ENCODE measurements at regions of chr3 and their contacts with region 1.

Region 1: GRCh38 chr3:99023590-99024192 is 122.2 kb upstream of the DCBLD2 start:
- ATAC-seq: no peak
- H3K4me3 ChIP-seq: no peak overlapping the region
- H3K27ac ChIP-seq: no peak overlapping the region
- H3K4me1 ChIP-seq: no peaks in the 10 kb centered on the region

Region 2: GRCh38 chr3:98602078-98602678 is 421.5 kb before region 1 on chr3:
- in situ Hi-C with region 1: loop called in 1 of 9 experiments (anchors 25 kb)
- ATAC-seq: peak; percentile 61 to 86 (median 76)
- H3K4me3 ChIP-seq: no peak overlapping the region
- H3K27ac ChIP-seq: no peak overlapping the region
- H3K4me1 ChIP-seq: no peaks in the 10 kb centered on the region

Region 3: GRCh38 chr3:99114565-99115291 is 91.0 kb after region 1 on chr3:
- in situ Hi-C with region 1: loop called in 1 of 9 experiments (anchors 10 kb)
- ATAC-seq: peak in 3 of 8 experiments; percentile 96 to 99 (median 99)
- H3K4me3 ChIP-seq: no peak overlapping the region
- H3K27ac ChIP-seq: no peak overlapping the region
- H3K4me1 ChIP-seq: no peaks in the 10 kb centered on the region

Region 4: DNA sequence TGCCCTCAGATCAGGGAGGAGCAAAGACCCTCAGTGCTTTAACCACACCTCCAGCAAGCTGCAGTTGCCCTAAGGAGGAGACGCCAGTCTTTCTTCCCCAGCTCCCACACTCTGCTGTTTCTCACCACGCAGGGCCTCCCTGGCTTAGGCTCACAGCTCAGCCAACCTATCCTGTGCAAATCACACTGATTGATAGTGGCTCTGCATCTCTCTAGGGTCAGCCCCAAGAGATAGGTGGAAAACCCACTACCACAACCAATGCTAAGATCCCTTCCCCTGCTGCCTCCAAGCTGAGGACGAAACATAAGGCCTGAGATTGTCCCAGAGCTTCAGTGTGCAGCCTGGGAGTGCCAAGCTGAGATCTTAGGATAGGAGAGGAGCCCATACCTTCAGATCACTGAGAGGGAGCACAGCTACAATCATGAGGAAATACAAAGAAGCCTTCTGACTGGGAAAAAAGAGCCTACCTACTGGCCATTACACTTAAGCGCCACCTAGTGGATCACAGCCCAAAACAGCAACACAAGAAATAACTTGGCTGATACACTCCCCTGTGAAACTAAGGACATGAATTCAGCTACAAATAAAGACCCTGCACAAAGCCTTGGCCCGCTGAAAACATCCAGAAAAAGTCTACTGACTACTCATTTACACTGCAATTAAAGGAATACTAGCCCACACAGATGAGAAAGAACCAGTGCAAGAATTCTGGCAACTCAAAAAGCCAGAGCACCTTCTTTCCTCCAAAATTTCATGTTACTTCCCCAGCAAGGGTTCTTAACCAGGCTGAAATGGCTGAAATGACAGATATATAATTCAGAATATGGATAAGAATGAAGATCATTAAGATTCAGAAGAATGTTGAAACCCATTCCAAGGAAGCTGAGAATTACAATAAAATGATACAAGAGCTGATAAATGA is 149.3 kb after region 1 on chr3:
- in situ Hi-C with region 1: loop called in 3 of 9 experiments (anchors 10 to 25 kb)
- ATAC-seq: peak in 5 of 8 experiments; percentile 27 to 89 (median 83)
- H3K4me3 ChIP-seq: no peak overlapping the region
- H3K27ac ChIP-seq: no peak overlapping the region
- H3K4me1 ChIP-seq: peaks cover 0 to 8% of the 10 kb centered on the region in 2 donors

Region 5: DNA sequence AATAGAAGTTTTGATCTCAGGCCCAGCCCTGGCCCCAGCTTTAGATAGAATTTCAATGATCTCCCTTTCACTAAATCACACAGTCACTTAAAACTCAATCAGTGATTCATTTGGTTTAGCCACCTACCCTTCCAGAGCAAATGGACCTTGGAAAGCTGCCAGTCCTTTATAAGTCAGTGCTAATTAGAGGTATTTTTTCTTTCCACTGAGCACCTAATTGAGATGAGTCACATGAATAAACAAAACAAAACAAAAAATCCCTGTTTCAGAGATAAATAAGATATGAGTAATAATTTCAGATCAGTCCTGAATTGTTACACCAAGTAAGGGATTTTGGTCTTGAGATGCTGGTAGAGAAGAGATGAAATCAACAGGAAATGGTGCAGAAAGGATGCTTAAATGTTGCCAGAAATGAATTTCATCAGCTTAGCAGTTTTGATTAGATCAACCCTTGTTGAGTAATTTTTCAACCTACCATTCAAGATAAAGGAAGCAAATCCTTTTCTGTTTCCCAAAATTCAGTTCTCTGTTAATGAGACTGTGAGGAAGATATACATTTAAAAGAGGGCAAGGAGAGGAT is 262.7 kb after region 1 on chr3:
- in situ Hi-C with region 1: no loop called
- ATAC-seq: no peak
- H3K4me3 ChIP-seq: no peak overlapping the region
- H3K27ac ChIP-seq: no peak overlapping the region
- H3K4me1 ChIP-seq: no peaks in the 10 kb centered on the region

Region 6: DNA sequence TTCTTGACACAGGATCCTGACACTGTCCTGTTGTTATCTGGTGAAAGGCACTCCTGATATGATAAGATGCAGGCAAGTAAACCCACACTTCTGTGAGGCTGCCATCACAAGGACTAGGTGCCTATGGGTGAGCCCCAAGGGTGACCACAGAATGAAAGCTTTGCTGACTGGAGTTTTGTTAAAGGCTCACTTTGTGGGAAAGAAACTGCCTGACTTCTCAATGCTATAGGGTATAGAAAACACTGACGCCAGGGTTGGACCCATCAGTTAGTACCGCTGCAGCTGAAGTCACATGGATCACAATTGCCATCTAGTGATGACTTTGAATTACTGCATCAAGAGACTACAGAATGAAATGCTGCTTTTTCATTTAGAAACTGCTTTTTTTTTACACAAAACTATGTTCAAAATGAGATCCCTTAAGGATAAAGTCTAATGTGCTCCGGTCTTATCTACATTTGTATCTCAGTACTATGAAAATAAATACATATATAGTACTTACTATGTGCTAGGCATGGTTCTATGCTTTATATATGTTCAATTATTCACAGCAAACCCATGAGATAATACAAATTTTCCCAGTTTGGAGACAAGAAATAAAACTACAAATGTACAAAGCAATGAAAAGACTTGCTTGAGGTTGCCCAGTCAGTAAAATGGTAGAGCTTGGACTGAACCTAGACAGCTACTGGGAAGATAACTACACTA is 729.7 kb after region 1 on chr3:
- in situ Hi-C with region 1: loop called in 4 of 9 experiments (anchors 10 to 25 kb)
- ATAC-seq: peak; percentile 76 to 92 (median 80)
- H3K4me3 ChIP-seq: no peak overlapping the region
- H3K27ac ChIP-seq: no peak overlapping the region
- H3K4me1 ChIP-seq: no peaks in the 10 kb centered on the region

Measured in motor neuron (in vitro differentiated cells).